ENCODE measurements at regions of chr2 and their contacts with region 1.

Region 1: DNA sequence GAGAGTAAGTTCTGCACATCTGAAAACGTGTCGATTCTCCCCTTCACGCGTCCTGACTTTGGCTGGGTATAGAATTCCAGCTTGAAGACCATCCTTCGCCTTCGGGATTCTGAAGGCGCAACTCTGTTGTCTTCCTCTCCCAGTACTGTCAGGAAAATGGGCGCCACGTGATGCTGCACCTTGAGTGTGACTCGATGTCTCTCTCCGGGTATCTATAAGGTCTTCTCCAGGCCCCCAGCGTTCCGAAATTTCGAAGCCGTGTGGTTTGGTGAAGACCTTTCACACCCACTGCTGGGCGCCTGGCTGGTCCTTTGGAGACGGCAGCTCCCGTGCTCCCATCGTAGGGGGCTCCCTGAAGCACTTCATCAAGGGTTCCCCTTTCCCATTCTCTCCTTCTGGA is 203.7 kb downstream of the HDAC4 start:
- DNase-seq: no peak
- H3K4me3 ChIP-seq: no peak overlapping the region
- H3K27ac ChIP-seq: no peak overlapping the region
- H3K4me1 ChIP-seq: no peaks in the 10 kb centered on the region
- H3K27me3 ChIP-seq: no peaks in the 10 kb centered on the region
- CTCF ChIP-seq: no peak

Region 2: DNA sequence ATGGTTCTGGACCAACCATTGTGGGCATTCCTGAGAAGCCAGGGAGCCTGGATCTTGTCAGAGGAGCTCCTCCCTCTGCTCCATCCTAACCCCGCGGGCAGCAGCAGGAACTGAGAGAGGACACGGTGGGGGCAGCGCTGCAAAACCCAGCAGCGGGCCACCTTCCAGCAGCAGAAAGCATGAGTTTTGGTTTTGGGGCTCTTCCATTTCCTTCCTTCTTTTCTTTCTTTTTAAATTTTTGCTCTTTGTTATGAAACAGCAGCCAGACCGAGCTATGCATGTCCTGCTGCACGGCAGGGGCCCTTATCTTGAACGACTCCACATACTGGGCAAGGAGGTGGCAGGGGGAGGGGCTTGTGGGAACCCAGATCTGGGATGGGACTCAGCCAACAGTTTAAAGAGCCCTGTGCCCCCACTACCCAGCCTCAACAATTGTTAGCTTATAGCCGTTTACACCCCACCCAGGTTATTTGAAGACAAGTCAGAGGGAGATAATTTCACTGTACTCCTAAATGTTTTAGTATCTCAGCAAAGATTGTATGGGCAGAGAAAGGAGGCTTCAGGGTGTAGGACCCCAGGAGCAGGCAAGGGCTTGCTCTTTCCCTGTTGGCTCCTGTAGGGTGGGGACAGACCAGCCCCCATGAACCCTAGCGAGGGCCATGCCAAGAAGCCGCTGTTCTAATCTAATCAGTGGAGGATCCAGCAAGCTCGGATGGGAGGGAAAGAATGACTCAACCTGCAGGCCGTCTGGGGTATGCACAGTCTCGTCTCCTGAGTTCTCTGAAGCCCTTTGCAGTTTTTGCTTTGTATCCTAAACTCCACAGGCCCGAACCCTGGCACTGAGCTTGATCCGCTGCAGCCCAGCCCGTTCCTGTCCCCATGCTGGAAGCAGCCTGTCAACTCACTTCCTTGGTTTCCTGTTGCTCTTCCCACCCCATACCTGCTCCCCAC is 1494.4 kb before region 1 on chr2:
- CTCF ChIA-PET with region 1: interaction called, 13 read pairs
- POLR2A ChIA-PET with region 1: no interaction called
- intact Hi-C with region 1: no loop called
- DNase-seq: peak in 1 of 2 experiments; percentile 54
- H3K4me3 ChIP-seq: no peak overlapping the region
- H3K27ac ChIP-seq: no peak overlapping the region
- H3K4me1 ChIP-seq: peaks cover 5% of the 10 kb centered on the region
- H3K27me3 ChIP-seq: no peaks in the 10 kb centered on the region
- CTCF ChIP-seq: no peak

Region 3: DNA sequence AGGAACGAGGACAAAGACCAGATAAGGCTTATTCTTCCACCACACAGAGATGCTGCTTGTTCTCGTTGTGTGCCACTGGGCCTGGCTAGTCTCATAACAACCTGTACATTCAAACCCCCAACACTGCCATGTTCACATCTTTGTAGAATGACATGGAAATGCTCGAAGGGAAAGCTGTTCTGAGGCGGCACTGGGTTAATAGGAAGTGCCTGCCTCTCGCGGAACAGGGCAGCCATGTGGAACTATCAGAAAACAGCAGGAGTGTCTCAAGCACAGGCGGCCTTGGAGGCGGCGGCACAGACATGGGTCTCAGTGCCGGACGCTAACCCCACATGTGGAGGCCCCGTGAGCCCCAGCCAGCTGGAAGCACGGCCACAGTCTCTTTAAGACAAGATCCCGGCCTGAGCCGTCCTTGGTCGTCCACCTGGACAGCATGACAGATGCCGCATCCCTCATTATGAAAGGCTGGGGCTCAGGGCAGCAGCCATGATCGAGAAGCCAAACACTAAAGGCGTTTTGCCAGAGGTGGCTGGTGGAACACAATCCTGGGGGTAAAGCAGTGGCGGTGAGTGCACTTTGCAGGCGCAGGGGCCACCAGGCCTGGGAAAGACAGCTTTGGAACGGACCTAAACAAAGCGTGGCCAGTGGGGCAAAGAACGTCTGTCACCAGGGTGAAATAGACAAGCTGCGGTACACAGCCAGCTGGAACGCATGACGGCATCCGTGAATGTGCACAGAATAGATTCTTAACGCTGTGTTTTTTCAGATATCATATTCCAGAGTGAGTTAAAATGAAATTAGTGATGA is 42.7 kb after region 1 on chr2:
- CTCF ChIA-PET with region 1: no interaction called
- POLR2A ChIA-PET with region 1: no interaction called
- intact Hi-C with region 1: no loop called
- DNase-seq: no peak
- H3K4me3 ChIP-seq: no peak overlapping the region
- H3K27ac ChIP-seq: no peak overlapping the region
- H3K4me1 ChIP-seq: peaks cover 2% of the 10 kb centered on the region
- H3K27me3 ChIP-seq: no peaks in the 10 kb centered on the region
- CTCF ChIP-seq: no peak

Measured in PC-9 (cell line).